Activated CD4-positive, alpha-beta T cell treated with anti-CD3 and anti-CD28 coated beads for 36 hours (primary cell): ENCODE measurements at regions of chr19 and their contacts with region 1.

Region 1: GRCh38 chr19:2950286-2951124 is 5.7 kb upstream of the ZNF77 start:
- DNase-seq: peak; percentile 100
- ATAC-seq: peak; percentile 99
- H3K4me3 Mint-ChIP-seq: peak overlapping the region; percentile 95
- H3K27ac Mint-ChIP-seq: peak overlapping the region; percentile 95
- H3K4me1 Mint-ChIP-seq: peaks cover 14% of the 10 kb centered on the region
- H3K27me3 Mint-ChIP-seq: no peaks in the 10 kb centered on the region

Region 2: DNA sequence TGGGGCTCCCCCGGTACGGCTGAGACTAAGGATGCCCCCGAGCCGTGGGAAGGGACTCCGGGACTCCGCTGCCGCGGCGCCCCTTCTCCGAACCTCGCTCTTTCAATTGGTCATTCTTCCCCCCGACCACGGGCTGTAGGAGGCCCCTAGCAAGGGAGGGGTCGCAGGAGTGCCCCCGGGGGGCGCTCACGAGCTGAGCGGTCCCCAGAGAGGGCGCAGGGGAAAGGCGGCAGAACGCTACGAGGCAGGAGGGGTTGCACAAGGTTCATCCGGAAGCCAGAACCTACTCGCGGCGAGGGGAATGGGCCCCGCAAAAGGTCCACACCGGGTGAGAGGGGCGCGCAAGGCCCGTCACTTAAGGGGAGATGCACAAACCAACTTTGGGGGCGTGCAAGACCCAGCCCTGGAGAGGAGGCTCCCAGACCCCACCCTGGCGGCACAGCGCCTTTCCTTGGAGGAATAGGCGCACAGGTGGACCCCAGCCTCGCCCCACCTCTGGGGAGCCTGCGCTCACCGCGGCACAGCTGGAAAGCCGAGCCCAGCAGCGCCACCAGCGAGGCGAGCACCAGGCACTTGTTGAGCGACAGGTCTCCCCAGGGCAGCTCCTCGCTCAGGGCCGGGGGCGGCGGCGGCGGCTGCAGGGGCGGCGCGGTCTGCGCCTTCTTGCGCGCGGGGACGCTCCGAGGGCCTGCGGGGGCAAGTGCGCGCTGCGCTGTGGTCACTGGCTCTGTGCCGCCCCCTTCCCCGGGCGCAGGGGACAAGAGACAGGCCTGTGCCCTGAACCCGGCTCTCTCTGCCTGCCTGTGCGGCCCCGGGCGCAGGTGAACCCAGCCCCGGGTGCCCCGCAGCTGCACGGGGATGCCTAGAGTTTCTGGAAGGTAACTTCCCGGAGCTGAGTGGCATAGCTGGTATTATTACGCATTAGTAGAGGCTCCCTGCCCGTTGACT is 697.1 kb before region 1 on chr19:
- CTCF ChIA-PET with region 1: no interaction called
- POLR2A ChIA-PET with region 1: no interaction called
- intact Hi-C with region 1: no loop called
- DNase-seq: peak; percentile 69
- ATAC-seq: peak; percentile 23
- H3K4me3 Mint-ChIP-seq: peak overlapping the region; percentile 49
- H3K27ac Mint-ChIP-seq: no peak overlapping the region
- H3K4me1 Mint-ChIP-seq: peaks cover 24% of the 10 kb centered on the region
- H3K27me3 Mint-ChIP-seq: peaks cover 4% of the 10 kb centered on the region

Region 3: GRCh38 chr19:2739602-2740313 is 210.7 kb before region 1 on chr19 and contains the start of gene SLC39A3:
- CTCF ChIA-PET with region 1: interaction called, 5 read pairs
- POLR2A ChIA-PET with region 1: no interaction called
- intact Hi-C with region 1: loop called in 1 of 2 experiments (anchors 1 kb)
- DNase-seq: peak; percentile 99
- ATAC-seq: peak; percentile 100
- H3K4me3 Mint-ChIP-seq: peak within 1 kb of the TSS; percentile 95
- H3K27ac Mint-ChIP-seq: peak within 1 kb of the TSS; percentile 70
- H3K4me1 Mint-ChIP-seq: peaks cover 14% of the 10 kb centered on the region
- H3K27me3 Mint-ChIP-seq: peaks cover 8% of the 10 kb centered on the region
- total RNA-seq, gene SLC39A3: 26.6 to 46.0 TPM

Region 4: DNA sequence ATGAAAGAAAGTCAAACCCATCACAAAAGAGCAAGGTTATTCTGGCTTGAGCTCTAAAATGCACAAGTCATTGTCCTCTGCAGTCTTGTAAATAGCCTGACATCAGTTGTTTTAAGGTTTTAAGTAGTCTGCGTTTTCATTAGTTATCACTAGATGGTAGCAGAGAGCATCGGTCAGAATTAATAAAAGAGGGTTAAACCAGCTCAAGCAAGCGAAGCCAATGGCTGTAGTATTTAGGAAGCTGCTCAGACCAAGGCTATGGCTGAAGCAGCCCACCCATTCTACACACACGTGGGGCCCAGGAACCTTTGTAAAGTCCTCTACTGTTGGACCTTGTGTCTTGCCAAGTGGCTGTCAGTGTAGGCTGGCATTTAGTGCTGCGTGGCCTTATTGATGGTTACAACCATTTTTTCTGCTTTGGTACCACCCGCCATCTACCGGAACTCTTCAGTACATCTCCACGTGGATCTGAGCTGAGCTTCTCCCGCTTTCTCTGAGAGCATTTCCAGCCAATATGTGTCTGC is 63.1 kb before region 1 on chr19:
- CTCF ChIA-PET with region 1: interaction called, 15 read pairs
- POLR2A ChIA-PET with region 1: no interaction called
- intact Hi-C with region 1: loop called in 1 of 2 experiments (anchors 2 kb)
- DNase-seq: no peak
- ATAC-seq: peak; percentile 66
- H3K4me3 Mint-ChIP-seq: no peak overlapping the region
- H3K27ac Mint-ChIP-seq: peak overlapping the region; percentile 2
- H3K4me1 Mint-ChIP-seq: peaks cover 5% of the 10 kb centered on the region
- H3K27me3 Mint-ChIP-seq: no peaks in the 10 kb centered on the region

Region 5: GRCh38 chr19:2962045-2962561 is 11.6 kb after region 1 on chr19:
- CTCF ChIA-PET with region 1: interaction called, 18 read pairs
- POLR2A ChIA-PET with region 1: no interaction called
- intact Hi-C with region 1: no loop called
- DNase-seq: peak; percentile 64
- ATAC-seq: peak; percentile 84
- H3K4me3 Mint-ChIP-seq: peak overlapping the region; percentile 38
- H3K27ac Mint-ChIP-seq: peak overlapping the region; percentile 65
- H3K4me1 Mint-ChIP-seq: peaks cover 5% of the 10 kb centered on the region
- H3K27me3 Mint-ChIP-seq: no peaks in the 10 kb centered on the region

Region 6: DNA sequence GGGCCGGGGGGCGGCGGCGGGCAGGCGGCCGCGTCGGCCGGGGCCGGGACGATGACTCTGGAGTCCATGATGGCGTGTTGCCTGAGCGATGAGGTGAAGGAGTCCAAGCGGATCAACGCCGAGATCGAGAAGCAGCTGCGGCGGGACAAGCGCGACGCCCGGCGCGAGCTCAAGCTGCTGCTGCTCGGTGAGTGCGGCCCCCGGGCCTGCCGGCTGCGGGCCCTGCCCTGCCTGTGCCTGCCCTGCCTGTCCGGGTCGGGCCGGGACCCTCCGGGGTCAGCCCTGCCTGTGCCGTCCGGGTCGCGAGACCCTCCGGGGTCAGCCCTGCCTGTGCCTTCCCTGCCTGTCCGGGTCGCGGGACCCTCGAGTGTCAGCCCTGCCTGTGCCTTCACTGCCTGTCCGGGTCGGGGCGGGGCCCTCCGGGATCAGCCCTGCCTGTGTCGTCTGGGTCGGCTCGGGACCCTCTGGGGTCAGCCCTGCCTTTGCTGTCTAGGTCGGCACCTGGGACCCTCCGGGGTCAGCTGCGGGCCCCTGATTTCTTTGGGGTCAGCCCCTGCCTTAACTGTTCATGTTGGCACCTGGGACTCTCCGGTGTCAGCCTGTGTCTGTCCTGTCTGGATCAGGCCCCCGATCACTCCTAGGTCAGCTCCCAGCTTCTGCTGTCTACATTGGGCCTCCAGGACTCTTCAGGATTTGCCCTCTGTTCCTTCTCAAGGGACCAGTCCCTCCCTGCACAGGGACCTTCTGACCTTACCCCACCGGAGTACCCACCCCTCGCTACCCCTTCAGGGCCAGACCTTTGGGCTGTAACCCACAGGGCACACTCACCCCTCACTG is 144.3 kb after region 1 on chr19:
- CTCF ChIA-PET with region 1: interaction called, 3 read pairs
- POLR2A ChIA-PET with region 1: no interaction called
- intact Hi-C with region 1: loop called in 1 of 2 experiments (anchors 1 kb)
- DNase-seq: peak; percentile 68
- ATAC-seq: peak; percentile 45
- H3K4me3 Mint-ChIP-seq: peak overlapping the region; percentile 74
- H3K27ac Mint-ChIP-seq: no peak overlapping the region
- H3K4me1 Mint-ChIP-seq: peaks cover 26% of the 10 kb centered on the region
- H3K27me3 Mint-ChIP-seq: no peaks in the 10 kb centered on the region

Region 7: DNA sequence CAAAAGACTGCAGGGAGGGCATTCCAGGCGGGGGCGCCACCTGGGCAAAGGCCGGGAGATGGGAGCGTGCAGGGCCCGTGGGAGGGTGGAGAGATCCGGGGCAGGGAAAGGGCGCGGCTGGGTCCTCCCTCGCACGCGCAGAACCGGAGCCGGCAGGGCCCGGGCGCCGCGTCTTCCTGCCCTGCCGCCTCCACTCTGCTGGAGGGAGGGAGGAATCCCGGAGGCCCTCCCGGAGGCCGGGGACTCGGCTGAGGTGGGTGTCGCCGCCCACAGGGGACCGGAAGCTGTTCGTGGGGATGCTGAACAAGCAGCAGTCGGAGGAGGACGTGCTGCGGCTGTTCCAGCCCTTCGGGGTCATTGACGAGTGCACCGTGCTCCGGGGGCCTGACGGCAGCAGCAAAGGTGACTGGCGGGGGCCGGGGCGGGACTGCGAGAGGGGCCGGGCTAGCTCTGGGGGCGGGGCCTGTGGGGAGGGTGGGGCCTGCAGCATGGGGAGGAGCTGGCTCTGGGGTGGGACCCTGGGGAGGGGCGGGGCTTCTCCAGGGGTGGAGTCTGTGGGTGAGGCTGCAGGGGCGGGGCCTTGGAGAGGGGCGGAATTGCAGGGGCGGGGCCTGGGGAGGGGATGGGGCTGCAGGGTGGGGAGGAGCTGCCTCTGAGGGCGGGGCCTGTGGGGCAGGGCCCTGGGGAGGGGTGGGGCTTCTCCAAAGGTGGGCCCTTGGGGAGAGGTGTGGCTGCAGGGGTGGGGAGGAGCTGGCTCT is 325.3 kb after region 1 on chr19:
- CTCF ChIA-PET with region 1: interaction called, 15 read pairs
- POLR2A ChIA-PET with region 1: no interaction called
- intact Hi-C with region 1: loop called in 1 of 2 experiments (anchors 1 kb)
- DNase-seq: peak; percentile 99
- ATAC-seq: peak; percentile 83
- H3K4me3 Mint-ChIP-seq: peak overlapping the region; percentile 73
- H3K27ac Mint-ChIP-seq: peak overlapping the region; percentile 80
- H3K4me1 Mint-ChIP-seq: peaks cover 8% of the 10 kb centered on the region
- H3K27me3 Mint-ChIP-seq: peaks cover 9% of the 10 kb centered on the region

Region 8: DNA sequence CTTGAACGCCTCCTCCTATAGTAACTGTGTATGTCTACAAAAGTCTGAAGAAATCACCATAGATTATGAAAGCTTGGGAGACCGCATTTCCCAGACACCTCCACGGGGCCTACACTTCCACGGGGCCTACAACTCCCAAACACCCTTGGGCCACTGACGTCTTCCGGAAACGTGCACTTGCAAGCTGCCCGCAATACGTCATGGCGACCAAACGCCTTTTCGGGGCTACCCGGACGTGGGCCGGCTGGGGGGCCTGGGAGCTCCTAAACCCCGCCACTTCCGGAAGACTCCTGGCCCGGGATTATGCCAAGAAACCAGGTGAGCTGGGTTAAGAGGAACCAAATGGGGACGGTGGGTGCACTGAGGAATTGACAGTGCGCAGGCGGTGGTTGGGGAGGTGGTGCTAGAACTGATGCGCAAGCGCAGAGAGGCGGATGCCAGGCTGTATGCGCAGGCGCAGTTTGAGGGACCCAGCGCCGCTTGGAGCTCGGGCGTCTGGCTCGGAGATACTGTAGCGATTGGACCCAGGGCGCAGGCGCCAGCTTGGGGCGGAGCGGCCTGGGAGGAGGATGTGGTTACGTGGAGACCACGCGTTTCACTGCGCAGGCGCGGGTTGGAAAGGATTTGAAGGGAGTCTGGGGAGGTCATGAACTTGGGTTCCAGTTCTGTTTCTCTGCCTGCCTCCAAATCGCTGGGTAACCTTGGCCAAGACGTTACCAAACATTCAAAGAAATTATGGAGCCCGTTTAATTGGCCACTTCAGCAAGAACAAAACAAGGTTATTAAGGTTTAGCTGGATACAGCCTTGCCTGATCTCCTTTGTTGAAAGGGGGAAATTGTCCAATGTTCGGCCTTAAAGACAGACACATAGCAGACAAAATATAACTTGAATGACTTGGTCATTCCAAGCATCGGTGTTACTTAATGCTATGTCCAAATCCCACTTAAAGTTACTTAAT is 812.3 kb after region 1 on chr19 and contains the start of gene MRPL54:
- CTCF ChIA-PET with region 1: interaction called, 4 read pairs
- POLR2A ChIA-PET with region 1: no interaction called
- intact Hi-C with region 1: loop called in 1 of 2 experiments (anchors 1 kb)
- DNase-seq: peak; percentile 100
- ATAC-seq: peak; percentile 88
- H3K4me3 Mint-ChIP-seq: peak within 1 kb of the TSS; percentile 100
- H3K27ac Mint-ChIP-seq: peak within 1 kb of the TSS; percentile 99
- H3K4me1 Mint-ChIP-seq: peaks cover 39% of the 10 kb centered on the region
- H3K27me3 Mint-ChIP-seq: no peaks in the 10 kb centered on the region
- total RNA-seq, gene MRPL54: 54.8 to 63.9 TPM